ENCODE measurements at regions of chr15 and their contacts with region 1.

Region 1: GRCh38 chr15:84894442-84895361 is 10.2 kb downstream of the SLC28A1 start:
- DNase-seq: no peak
- H3K4me3 ChIP-seq: no peak overlapping the region
- CTCF ChIP-seq: no peak

Region 2: GRCh38 chr15:84818261-84819131 is 76.2 kb before region 1 on chr15:
- in situ Hi-C with region 1: loop called (anchors 5 kb)
- DNase-seq: no peak
- H3K4me3 ChIP-seq: no peak overlapping the region
- CTCF ChIP-seq: no peak

Measured in astrocyte of the cerebellum (primary cell).